ENCODE measurements at regions of chr1 and their contacts with region 1.

Region 1: GRCh38 chr1:240027059-240027462 is 64.6 kb upstream of the FMN2 start:
- DNase-seq: no peak

Region 2: GRCh38 chr1:239956263-239956662 is 70.8 kb before region 1 on chr1:
- intact Hi-C with region 1: no loop called
- DNase-seq: no peak

Region 3: DNA sequence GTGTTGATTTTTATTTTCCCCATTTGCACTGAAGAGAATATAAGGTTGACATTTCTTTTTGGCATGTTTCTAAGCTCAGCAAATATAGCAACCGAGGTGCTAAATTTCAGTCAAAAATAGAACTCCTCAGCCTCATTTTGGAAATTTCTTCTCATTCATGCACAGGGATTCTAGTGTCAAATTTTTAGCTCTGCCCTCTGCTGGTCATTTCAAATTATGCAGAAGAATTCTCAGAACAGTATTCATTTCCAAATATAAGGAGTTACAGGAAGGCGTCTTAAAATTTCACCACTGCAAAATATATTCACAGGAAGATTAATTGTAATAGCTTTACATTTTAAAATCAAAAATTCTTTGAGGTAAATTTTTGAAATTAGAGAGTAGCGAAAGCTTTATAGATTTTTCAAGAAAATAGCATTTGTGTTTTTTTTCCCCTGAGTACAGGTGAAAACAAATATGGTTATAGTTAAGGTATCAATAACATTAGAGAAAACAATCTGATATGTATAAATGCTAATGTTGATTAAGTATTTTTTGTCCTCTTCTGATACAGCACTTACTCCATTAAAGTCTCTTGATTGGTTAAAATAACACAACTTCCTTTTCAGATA is 122.5 kb after region 1 on chr1:
- intact Hi-C with region 1: loop called (anchors 2 kb)
- DNase-seq: no peak

Measured in cardiac septum (tissue), 1 donor.